GM10248 (cell line): ENCODE measurements at regions of chr14 and their contacts with region 1.

Region 1: GRCh38 chr14:39857376-39858055 is 425.3 kb upstream of the FBXO33 start:
- DNase-seq: no peak
- CTCF ChIP-seq: no peak

Region 2: GRCh38 chr14:39847194-39847593 is 10.3 kb before region 1 on chr14:
- CTCF ChIA-PET with region 1: interaction called, 10 read pairs
- POLR2A ChIA-PET with region 1: no interaction called
- DNase-seq: no peak
- CTCF ChIP-seq: no peak